HEK293T (cell line): ENCODE measurements at regions of chr10 and their contacts with region 1.

Region 1: GRCh38 chr10:75401569-75402485 is at the start of gene ZNF503:
- DNase-seq: peak; percentile 79

Region 2: GRCh38 chr10:75019370-75019769 is 382.5 kb before region 1 on chr10:
- CTCF ChIA-PET with region 1: no interaction called
- POLR2A ChIA-PET with region 1: no interaction called
- DNase-seq: no peak

Region 3: GRCh38 chr10:75294866-75295701 is 106.7 kb before region 1 on chr10:
- CTCF ChIA-PET with region 1: interaction called, 22 read pairs
- POLR2A ChIA-PET with region 1: interaction called, 178 read pairs
- DNase-seq: peak; percentile 87

Region 4: GRCh38 chr10:75312440-75312839 is 89.4 kb before region 1 on chr10:
- CTCF ChIA-PET with region 1: no interaction called
- POLR2A ChIA-PET with region 1: no interaction called
- DNase-seq: no peak

Region 5: DNA sequence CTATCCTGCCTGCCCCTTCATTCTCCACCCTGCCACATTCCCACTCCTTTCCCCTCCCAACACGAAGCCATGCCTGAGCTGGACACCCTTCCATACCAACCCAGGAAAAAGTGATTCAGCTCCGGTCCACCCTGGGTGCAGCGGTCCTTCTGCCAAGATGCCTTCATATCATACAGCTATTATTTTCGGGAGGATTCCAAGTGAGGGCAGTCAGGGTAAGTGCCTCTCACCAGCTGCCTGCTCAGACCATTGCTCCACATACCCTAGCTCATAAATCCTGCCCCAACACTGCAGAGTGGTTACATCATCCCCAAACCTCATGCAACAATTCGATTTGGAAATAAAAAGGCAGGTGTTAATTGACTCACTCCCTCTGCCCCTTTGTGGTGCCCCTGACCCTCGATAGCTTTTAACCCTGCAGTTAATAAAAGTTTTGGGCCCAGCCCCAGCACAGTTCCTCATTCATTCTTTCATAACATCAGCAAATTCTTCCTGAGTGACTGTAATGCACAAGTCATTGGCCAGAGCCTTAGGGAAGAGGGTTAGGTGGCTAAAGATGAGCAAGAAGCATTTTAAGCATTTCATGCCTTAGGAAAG is 42.9 kb before region 1 on chr10:
- CTCF ChIA-PET with region 1: interaction called, 3 read pairs
- POLR2A ChIA-PET with region 1: interaction called, 125 read pairs
- DNase-seq: peak; percentile 50

Region 6: GRCh38 chr10:75379212-75379724 is 22.6 kb before region 1 on chr10:
- CTCF ChIA-PET with region 1: no interaction called
- POLR2A ChIA-PET with region 1: interaction called, 127 read pairs
- DNase-seq: peak; percentile 68

Region 7: DNA sequence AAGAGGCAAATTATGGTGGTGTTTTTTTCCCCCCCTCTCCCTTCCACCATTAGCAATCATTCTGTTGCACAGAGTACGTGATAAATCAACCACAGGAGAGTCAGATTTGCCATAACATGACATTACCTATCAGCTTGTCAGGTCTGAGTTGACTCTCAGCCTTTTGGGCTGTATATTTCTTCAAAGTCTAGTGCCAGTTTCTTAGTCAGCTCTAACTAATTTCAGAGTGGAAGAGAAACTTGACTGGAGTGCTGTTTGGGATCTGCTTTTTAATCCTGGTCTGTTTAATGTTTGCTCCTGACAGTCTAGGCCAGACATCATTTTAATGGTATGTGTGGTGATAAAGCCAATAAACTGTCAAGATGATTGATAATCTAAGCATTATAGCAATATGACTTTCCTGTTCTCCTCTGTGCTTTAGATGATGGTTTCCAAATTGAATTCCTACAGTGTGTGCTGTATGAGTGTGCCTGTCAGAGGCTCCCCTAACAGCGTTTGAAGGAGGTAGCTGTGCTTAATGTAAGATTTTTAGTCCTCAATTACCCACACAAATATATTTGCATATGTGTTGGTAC is 106.5 kb after region 1 on chr10:
- CTCF ChIA-PET with region 1: no interaction called
- POLR2A ChIA-PET with region 1: interaction called, 46 read pairs
- DNase-seq: peak; percentile 56

Region 8: DNA sequence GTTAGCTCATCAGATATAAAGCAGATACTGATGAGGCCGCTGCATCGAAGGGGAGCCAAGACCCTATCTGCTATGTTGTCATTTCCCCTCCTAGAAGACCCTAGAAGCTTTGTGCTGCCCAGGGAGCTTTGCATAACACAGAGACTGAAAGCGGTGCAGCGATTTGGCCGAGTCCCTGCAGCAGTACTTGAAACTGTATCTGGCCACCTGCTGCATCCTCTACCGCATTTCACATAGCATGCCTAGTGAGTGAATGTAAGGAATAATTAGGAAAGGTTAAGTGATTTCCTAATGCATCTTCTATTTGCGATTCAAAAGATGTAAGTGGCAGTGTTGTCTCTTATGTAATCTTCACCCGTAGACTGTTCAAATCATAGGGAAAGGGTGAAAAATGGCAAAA is 136.3 kb after region 1 on chr10:
- CTCF ChIA-PET with region 1: no interaction called
- POLR2A ChIA-PET with region 1: interaction called, 14 read pairs
- DNase-seq: no peak

Region 9: DNA sequence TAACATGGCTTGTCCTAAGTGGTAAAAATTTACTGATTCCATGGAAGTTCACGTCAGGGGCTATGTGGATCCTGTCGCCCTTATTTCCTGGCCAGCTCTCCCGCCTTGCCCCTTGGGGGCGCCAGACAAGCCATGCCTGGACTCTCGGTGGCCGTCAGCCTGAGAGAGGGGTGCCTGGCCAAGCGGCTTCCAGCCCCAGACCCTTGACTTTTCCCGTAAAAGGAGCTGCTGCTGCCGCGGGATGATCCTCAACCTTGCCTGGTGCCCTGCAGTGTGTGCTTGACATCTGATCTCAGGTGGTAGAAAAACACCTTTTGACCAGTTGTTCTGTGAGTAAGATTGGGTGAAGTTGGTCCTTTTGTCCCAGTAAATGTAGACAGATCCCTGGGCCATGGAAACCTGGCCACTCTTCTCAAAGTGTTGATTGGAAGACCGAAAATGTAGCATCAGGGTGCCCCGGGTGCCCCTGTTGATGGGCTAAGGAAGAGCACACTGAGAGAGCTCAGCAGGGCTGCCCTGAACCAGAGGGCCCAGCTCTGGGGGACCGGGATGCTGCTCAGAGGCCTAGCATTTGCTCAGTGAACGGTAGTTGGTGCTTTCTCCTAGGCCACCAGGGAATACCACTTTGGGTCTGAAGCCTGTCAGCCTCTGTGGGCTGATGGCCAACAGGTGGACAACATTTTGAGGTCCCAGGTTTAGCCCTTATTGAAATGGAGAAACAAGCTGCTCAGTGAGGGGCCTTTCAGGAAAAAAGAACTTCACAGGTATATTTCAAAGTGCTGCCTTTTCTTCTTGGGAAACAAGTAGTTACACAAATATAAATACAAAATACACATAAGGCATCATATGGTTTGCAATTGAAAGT is 192.1 kb after region 1 on chr10:
- CTCF ChIA-PET with region 1: interaction called, 5 read pairs
- POLR2A ChIA-PET with region 1: interaction called, 101 read pairs
- DNase-seq: peak; percentile 73